Mucosa of descending colon (tissue), 3 donors: ENCODE measurements at regions of chr1 and their contacts with region 1.

Region 1: DNA sequence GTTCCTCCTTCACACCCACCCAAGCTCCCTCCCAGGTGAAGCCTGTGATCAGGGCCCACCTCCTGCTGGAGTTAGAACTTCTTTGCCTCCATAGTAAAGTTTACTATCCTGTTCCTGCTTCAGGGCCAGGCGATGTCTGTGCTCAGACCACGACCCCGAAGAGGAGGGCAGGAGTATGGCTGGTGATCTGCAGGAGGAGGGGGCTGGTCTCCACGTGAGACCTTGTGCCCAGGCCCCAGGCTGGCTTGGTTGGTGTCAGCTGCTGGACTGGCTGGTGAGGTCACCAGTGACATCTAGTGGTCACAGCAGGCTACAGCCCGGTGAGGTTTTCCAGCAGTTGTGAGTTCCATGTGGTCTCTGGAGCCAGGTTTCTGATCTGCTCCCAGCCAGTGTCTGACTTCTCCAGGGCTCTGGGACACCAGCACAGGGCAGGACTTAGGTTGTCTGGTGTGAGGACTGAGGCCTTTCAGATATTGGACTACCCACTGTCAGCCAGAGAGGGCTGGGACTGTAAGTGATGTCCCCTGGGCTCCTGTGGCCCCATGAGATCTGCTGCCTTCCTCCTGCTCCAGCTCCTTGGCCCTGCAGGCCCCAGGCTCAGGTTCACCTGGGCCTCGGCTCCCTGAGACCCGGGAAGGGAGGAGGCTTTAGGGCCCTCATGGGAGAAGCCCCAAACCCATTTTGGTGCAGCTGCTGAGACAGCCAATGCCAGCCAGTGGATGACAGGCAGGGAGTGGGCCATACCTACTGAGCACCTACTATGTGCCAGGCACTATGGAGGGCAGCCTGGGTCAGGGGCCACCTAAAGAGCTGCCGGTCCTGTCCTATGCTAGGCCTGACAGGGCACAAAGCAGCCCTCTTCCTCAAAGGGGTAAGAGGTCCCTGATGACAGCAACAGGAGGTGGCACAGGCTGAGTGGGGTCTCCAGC is 6.0 kb upstream of the UBL4B start:
- DNase-seq: peak in 2 of 3 donors; percentile 73 to 74
- ATAC-seq: peak; percentile 90
- H3K4me3 ChIP-seq: no peak overlapping the region
- H3K4me1 ChIP-seq: no peaks in the 10 kb centered on the region
- CTCF ChIP-seq: peak; percentile 90

Region 2: GRCh38 chr1:110053557-110054428 is 52.5 kb before region 1 on chr1:
- intact Hi-C with region 1: loop called (anchors 5 kb)
- DNase-seq: peak; percentile 63 to 88 (median 82)
- ATAC-seq: peak; percentile 66
- H3K4me3 ChIP-seq: no peak overlapping the region
- H3K4me1 ChIP-seq: peaks cover 15% of the 10 kb centered on the region
- CTCF ChIP-seq: peak; percentile 86